ENCODE measurements at regions of chr7 and their contacts with region 1.

Region 1: GRCh38 chr7:66628361-66629140 is at the start of gene KCTD7:
- DNase-seq: peak; percentile 92 to 97 (median 95)
- H3K4me3 ChIP-seq: peak within 1 kb of the TSS; percentile 90
- H3K4me3 Mint-ChIP-seq: peak within 1 kb of the TSS; percentile 89 to 98 (median 92)
- H3K27ac ChIP-seq: peak within 1 kb of the TSS; percentile 94
- H3K27ac Mint-ChIP-seq: peak within 1 kb of the TSS; percentile 92 to 98 (median 94)
- H3K4me1 ChIP-seq: peaks cover 38% of the 10 kb centered on the region
- H3K4me1 Mint-ChIP-seq: peaks cover 42 to 53% (median 47%) of the 10 kb centered on the region in 3 donors
- H3K27me3 ChIP-seq: no peaks in the 10 kb centered on the region
- H3K27me3 Mint-ChIP-seq: peaks cover 0 to 4% of the 10 kb centered on the region in 2 donors
- total RNA-seq, gene KCTD7: 11.6 to 12.5 TPM

Region 2: DNA sequence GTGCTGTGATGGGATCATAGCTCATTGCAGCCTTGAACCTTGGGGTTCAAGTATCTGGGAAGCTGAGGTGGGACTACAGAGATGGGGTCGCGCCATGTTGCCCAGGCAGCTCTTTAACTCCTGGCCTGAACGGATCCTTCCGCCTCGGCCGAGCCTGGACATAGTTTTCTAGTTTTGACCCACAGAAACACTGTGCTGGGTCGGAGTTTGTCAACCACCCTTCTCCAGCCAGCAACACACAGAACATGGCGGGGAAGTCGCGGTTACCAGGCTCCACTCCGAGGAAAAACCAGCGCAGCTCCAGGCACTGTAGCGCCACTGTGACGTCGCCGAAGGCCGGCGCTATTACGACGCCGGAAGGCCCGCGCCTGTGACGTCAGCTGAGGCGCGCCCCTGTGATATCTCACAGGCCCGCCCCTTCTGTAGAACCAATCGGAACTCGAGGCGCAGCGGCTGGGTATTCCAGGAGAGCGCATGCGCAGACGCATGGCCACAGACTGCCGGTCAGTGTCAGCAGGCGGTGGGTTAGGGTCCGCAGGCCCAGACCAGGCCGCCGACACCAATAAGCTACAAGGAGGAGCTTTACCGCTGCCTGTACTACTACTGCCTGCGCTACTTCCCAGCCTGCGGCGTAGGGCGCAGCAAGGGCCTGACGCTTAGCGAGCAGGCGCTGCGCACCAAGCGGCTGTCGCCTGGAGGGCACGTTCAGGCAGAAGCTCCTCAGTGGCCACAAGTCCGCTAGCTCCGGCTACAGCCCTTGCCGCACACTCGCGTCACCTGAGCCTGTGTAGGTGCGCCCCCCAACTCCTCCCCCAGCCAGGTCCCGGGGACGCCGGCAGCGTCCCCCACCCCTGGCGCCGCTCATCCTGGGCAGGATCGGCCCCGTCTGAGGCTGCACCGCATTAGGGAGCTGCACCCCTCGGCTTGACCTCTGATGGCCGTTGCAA is 135.0 kb before region 1 on chr7:
- CTCF ChIA-PET with region 1: no interaction called
- POLR2A ChIA-PET with region 1: interaction called, 12 read pairs
- DNase-seq: peak; percentile 94 to 98 (median 97)
- H3K4me3 ChIP-seq: peak overlapping the region; percentile 88
- H3K4me3 Mint-ChIP-seq: peak overlapping the region; percentile 93 to 98 (median 94)
- H3K27ac ChIP-seq: peak overlapping the region; percentile 97
- H3K27ac Mint-ChIP-seq: peak overlapping the region; percentile 98 to 100 (median 99)
- H3K4me1 ChIP-seq: peaks cover 6% of the 10 kb centered on the region
- H3K4me1 Mint-ChIP-seq: peaks cover 13 to 25% (median 19%) of the 10 kb centered on the region in 3 donors
- H3K27me3 ChIP-seq: no peaks in the 10 kb centered on the region
- H3K27me3 Mint-ChIP-seq: no peaks in the 10 kb centered on the region

Region 3: DNA sequence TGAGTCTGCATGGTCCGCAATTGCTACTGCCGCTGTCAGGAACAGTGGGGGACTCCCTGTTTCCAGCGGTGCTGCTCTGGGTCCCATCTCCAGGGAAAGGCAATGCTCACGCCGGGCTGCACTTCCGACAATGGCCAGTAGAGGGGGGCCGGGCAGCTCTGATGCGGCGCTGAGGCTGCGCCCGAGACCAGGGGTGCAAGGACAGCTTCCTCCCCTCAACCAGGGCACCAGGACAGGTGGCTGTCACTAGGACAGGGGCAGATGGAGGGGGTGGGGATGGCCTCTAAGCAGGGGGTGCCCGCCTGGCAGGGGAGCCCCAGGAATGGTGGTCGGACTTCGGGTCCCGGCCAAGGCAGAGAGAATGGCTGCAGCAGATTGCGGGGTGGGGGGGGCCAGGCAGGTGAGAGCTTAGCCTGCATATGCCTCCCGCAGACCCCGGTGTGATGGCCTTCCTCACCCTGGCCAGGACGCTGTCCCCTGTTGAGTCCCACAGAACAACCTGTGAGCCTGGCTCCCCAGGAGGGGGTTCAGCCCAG is 70.9 kb before region 1 on chr7:
- CTCF ChIA-PET with region 1: interaction called, 11 read pairs
- POLR2A ChIA-PET with region 1: no interaction called
- DNase-seq: peak; percentile 56 to 79 (median 65)
- H3K4me3 ChIP-seq: no peak overlapping the region
- H3K4me3 Mint-ChIP-seq: no peak overlapping the region
- H3K27ac ChIP-seq: no peak overlapping the region
- H3K27ac Mint-ChIP-seq: peak overlapping the region in 3 of 8 donors; percentile 43 to 63 (median 51)
- H3K4me1 ChIP-seq: no peaks in the 10 kb centered on the region
- H3K4me1 Mint-ChIP-seq: peaks cover 5 to 15% (median 14%) of the 10 kb centered on the region in 3 donors
- H3K27me3 ChIP-seq: no peaks in the 10 kb centered on the region
- H3K27me3 Mint-ChIP-seq: no peaks in the 10 kb centered on the region

Region 4: DNA sequence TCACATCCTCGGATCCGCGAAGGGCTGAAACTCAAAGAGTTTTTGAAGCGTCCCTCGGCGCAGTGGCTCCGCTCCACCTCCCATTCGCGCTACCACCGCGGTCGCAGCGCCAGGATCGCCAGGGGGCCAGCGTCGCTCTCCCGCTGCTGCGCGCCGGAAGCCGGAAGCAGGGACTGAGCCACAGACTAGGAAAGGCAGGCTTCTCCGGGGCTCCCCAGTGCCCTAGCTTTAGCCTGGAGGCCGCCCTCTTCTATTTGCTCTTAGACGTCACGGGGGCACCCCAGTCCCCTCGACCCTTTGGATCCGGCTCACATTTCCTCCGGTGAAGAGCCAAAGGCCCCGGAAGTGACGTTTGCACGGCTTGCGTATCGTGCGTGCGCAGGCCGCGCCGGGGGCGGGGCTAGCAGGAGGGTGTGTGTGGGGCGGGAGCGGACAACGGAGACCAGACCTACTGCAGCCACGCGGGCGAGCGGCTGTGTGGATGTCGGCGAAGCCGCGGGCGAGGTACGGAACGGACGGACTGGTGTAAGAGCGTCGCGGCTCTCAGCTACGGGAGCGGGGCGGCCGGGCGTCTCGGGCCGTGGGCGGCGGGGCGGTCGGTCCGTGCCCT is 25.7 kb after region 1 on chr7:
- CTCF ChIA-PET with region 1: interaction called, 11 read pairs
- POLR2A ChIA-PET with region 1: interaction called, 20 read pairs
- DNase-seq: peak; percentile 96 to 99 (median 97)
- H3K4me3 ChIP-seq: peak overlapping the region; percentile 95
- H3K4me3 Mint-ChIP-seq: peak overlapping the region; percentile 95 to 98 (median 96)
- H3K27ac ChIP-seq: peak overlapping the region; percentile 97
- H3K27ac Mint-ChIP-seq: peak overlapping the region; percentile 94 to 99 (median 98)
- H3K4me1 ChIP-seq: peaks cover 6% of the 10 kb centered on the region
- H3K4me1 Mint-ChIP-seq: peaks cover 23 to 40% (median 30%) of the 10 kb centered on the region in 3 donors
- H3K27me3 ChIP-seq: no peaks in the 10 kb centered on the region
- H3K27me3 Mint-ChIP-seq: peaks cover 0 to 1% of the 10 kb centered on the region in 2 donors